PC-9 (cell line): ENCODE measurements at regions of chr12 and their contacts with region 1.

Region 1: DNA sequence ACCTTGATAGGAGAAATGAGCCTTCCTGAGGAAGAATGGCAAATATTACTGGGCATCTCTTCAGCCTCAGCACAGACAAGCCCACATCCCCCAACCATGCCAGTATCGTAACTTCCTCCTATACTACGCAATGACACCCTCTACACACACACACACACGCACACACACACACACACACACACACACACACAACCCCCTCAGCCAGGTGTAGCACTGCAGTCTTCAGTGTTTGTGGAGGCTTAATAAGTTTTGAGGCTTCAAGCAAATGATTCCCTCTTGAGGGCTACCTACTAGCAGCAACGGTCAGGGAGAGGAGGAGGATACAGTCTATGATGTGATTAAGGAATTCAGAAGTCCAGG is 1.6 kb downstream of the DGKA start:
- DNase-seq: no peak
- H3K4me3 ChIP-seq: peak overlapping the region; percentile 78
- H3K27ac ChIP-seq: peak overlapping the region; percentile 80
- H3K4me1 ChIP-seq: peaks cover 65% of the 10 kb centered on the region
- H3K27me3 ChIP-seq: no peaks in the 10 kb centered on the region
- CTCF ChIP-seq: no peak

Region 2: GRCh38 chr12:54795644-54796043 is 1136.9 kb before region 1 on chr12:
- CTCF ChIA-PET with region 1: no interaction called
- POLR2A ChIA-PET with region 1: no interaction called
- intact Hi-C with region 1: no loop called
- DNase-seq: no peak
- H3K4me3 ChIP-seq: no peak overlapping the region
- H3K27ac ChIP-seq: no peak overlapping the region
- H3K4me1 ChIP-seq: no peaks in the 10 kb centered on the region
- H3K27me3 ChIP-seq: no peaks in the 10 kb centered on the region
- CTCF ChIP-seq: no peak

Region 3: DNA sequence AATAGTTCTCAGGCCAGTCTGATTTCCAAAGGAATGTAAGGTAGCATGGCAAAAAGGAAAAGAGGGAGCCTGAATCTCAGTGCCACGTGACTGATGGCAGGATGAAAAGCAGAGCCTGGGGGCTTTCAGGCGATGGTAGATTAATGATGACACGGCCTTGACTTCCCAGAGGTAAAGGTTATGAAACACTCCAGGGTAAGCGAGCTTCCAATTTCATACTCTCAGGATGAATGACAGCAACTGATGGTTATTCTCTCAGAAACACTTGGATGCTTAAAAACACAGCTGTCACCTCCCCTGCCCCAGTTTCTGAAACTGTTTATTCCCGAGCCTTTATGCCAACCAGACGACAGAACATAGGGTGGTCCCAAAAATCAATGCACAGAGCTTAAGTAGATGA is 160.8 kb before region 1 on chr12:
- CTCF ChIA-PET with region 1: no interaction called
- POLR2A ChIA-PET with region 1: interaction called, 23 read pairs
- intact Hi-C with region 1: no loop called
- DNase-seq: no peak
- H3K4me3 ChIP-seq: no peak overlapping the region
- H3K27ac ChIP-seq: no peak overlapping the region
- H3K4me1 ChIP-seq: no peaks in the 10 kb centered on the region
- H3K27me3 ChIP-seq: no peaks in the 10 kb centered on the region
- CTCF ChIP-seq: no peak

Region 4: DNA sequence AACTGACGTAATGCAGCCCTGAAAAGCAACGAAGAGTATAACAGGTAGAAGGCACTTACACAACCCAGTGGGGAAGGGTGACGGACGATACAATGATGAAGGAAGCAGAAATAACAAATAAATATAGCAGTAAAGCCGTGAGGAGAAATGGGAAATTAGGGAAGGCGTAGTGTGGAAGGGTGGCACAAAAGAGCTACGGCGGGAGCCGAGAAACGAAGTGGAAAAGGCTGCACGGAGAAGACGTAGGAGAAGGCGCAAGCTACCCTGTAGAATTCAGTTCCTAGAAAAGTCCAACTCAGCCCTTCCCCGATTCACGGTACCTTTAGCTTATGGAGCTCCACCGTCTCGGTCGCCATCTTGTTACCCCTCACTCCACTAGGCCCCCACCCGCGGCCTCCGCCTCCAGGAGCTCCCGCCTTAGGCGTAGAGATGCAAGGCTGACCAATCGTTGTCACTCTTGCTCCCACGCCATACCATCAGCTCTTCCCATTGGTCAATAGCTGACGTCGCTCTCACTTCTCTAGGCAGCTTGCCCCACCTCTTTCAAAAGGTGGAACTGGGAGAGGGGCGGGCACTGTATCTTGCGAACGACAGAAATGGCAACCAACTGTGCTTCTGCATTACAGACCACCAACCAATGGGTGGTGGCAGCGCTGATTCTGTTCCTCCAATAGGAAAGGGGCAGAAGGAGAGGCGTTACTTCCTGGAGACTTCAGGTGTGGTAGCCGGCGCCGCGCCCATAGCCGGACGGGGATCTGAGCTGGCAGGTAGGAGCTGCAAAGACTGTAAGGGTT is 115.0 kb before region 1 on chr12 and contains the starts of genes ORMDL2 and SARNP:
- CTCF ChIA-PET with region 1: interaction called, 6 read pairs
- POLR2A ChIA-PET with region 1: interaction called, 16 read pairs
- intact Hi-C with region 1: loop called (anchors 5 kb)
- DNase-seq: peak; percentile 96 to 99
- H3K4me3 ChIP-seq: peak within 1 kb of the TSS; percentile 72
- H3K27ac ChIP-seq: peak within 1 kb of the TSS; percentile 51
- H3K4me1 ChIP-seq: peaks cover 18% of the 10 kb centered on the region
- H3K27me3 ChIP-seq: no peaks in the 10 kb centered on the region
- CTCF ChIP-seq: no peak
- total RNA-seq, gene ORMDL2: 22.5 and 22.9 TPM in 2 replicates
- total RNA-seq, gene SARNP: 65.6 and 74.8 TPM in 2 replicates

Region 5: DNA sequence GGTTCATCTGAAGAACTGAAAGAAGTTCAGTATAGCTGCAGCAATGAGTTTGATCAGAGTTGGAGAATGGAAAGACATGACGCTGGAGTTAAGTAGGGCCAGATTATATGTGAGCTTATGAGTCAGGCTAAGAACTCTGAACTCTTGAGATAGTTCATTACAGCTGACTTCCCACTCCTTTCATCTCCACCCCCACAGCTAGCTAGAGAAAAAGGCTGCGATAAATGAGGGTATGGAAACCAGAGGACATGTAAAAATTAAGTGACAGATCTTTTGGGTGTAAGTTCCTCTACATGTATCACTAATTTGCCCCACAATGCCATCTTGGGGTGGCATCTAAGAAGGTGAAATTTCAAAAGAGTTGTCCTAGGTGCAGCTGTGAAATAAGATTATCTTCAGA is 33.4 kb before region 1 on chr12:
- CTCF ChIA-PET with region 1: no interaction called
- POLR2A ChIA-PET with region 1: interaction called, 11 read pairs
- intact Hi-C with region 1: no loop called
- DNase-seq: no peak
- H3K4me3 ChIP-seq: no peak overlapping the region
- H3K27ac ChIP-seq: no peak overlapping the region
- H3K4me1 ChIP-seq: no peaks in the 10 kb centered on the region
- H3K27me3 ChIP-seq: no peaks in the 10 kb centered on the region
- CTCF ChIP-seq: no peak

Region 6: DNA sequence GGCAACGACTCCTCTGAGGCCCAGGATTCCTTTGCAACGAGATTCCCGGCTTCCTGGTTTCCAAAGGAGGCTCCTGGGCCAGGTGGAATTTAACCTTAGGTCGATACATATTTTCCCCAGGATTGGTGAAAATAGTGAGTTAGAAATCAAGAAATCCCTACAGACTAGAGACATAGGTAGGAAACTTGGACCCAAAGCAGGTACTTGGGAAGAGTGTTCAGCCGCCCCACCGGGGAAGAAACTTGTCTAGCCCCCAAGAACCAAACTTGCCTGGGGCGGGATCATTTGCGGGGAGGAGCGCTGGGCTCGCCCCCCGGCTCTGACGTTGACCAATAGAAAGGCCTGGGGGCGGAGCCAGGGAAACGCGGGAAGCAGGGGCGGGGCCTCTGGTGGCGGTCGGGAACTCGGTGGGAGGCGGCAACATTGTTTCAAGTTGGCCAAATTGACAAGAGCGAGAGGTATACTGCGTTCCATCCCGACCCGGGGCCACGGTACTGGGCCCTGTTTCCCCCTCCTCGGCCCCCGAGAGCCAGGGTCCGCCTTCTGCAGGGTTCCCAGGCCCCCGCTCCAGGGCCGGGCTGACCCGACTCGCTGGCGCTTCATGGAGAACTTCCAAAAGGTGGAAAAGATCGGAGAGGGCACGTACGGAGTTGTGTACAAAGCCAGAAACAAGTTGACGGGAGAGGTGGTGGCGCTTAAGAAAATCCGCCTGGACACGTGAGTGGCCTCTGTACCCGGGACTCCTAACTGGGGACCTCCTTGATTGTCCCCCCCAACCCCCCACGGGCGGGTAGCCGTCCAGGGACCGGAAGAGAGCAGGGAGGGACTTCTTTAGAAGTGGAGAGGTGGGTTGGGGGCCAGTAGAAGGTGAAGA is 34.1 kb after region 1 on chr12 and contains the start of gene CDK2:
- CTCF ChIA-PET with region 1: no interaction called
- POLR2A ChIA-PET with region 1: no interaction called
- intact Hi-C with region 1: no loop called
- DNase-seq: peak; percentile 68 to 93
- H3K4me3 ChIP-seq: peak within 1 kb of the TSS; percentile 90
- H3K27ac ChIP-seq: peak within 1 kb of the TSS; percentile 49
- H3K4me1 ChIP-seq: peaks cover 28% of the 10 kb centered on the region
- H3K27me3 ChIP-seq: no peaks in the 10 kb centered on the region
- CTCF ChIP-seq: no peak
- total RNA-seq, gene CDK2: 93.8 and 99.4 TPM in 2 replicates

Region 7: DNA sequence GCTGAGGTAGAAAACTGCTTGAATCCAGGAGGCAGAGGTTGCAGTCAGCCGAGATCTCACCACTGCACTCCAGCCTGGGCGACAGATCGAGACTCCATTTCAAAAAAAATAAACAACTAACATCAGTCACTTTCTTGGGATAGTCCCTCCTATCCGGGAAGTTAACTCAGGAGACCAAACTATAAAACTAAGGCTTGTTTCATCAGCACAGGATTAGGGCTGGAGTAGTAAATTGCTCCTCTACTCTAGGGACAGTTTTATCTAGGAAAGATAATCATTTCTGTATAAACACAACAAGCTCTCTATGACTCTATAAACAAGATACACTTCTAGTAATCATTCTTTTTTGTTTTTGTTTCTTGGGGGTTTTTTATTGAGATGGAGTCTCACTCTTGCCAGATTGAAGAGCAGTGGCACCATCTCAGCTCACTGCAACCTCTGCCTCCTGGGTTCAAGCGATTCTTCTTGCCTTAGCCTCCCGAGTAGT is 120.9 kb after region 1 on chr12:
- CTCF ChIA-PET with region 1: interaction called, 10 read pairs
- POLR2A ChIA-PET with region 1: no interaction called
- intact Hi-C with region 1: no loop called
- DNase-seq: no peak
- H3K4me3 ChIP-seq: no peak overlapping the region
- H3K27ac ChIP-seq: no peak overlapping the region
- H3K4me1 ChIP-seq: peaks cover 10% of the 10 kb centered on the region
- H3K27me3 ChIP-seq: no peaks in the 10 kb centered on the region
- CTCF ChIP-seq: no peak

Region 8: GRCh38 chr12:56078990-56079664 is 146.6 kb after region 1 on chr12:
- CTCF ChIA-PET with region 1: no interaction called
- POLR2A ChIA-PET with region 1: interaction called, 13 read pairs
- intact Hi-C with region 1: no loop called
- DNase-seq: peak; percentile 74 to 91
- H3K4me3 ChIP-seq: peak overlapping the region; percentile 69
- H3K27ac ChIP-seq: peak overlapping the region; percentile 86
- H3K4me1 ChIP-seq: peaks cover 26% of the 10 kb centered on the region
- H3K27me3 ChIP-seq: no peaks in the 10 kb centered on the region
- CTCF ChIP-seq: peak; percentile 74